ENCODE measurements at regions of chr7 and their contacts with region 1.

Region 1: DNA sequence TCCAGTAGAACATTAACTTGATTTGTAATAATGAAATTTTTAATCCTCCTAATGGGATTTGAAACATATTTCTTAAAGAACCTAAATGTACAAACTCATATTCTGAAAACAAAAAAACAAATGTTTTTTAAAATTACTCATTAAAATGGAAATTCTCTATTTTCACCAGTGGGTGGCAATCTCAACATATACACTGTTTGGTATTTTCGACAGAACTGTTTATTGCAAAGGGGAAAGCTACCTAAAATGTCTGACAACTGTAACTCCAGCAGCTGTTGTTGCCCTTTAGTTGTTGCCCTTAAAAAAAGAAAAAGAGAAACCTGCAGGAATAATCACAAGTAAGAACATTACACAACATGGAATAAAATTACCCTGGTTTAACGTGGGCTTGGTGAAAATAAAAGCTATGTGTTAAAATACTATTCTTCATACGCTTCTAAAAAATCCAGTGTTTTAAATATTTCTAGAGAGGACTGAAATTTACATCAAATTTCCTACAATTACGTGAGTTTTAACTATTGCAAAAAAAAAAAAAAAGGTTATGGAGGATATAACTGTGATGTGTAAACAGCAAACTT is 54.5 kb downstream of the COL1A2 start:
- DNase-seq: peak; percentile 49
- H3K4me3 ChIP-seq: no peak overlapping the region
- H3K27ac ChIP-seq: no peak overlapping the region
- H3K4me1 ChIP-seq: peaks cover 0 to 11% of the 10 kb centered on the region in 2 experiments; a peak in 2 of 4 replicates
- H3K27me3 ChIP-seq: no peaks in the 10 kb centered on the region
- CTCF ChIP-seq: peak; percentile 88
- EP300 ChIP-seq: no peak
- RAD21 ChIP-seq: peak; percentile 97

Region 2: GRCh38 chr7:94295850-94296249 is 153.4 kb before region 1 on chr7:
- CTCF ChIA-PET with region 1: interaction called, 344 read pairs
- POLR2A ChIA-PET with region 1: no interaction called
- DNase-seq: peak; percentile 39
- H3K4me3 ChIP-seq: no peak overlapping the region
- H3K27ac ChIP-seq: peak overlapping the region; percentile 58 to 99; a peak in 3 of 4 replicates
- H3K4me1 ChIP-seq: peaks cover 9 to 47% of the 10 kb centered on the region in 2 experiments
- H3K27me3 ChIP-seq: no peaks in the 10 kb centered on the region
- CTCF ChIP-seq: peak; percentile 90
- EP300 ChIP-seq: no peak; a peak in 1 of 4 replicates
- RAD21 ChIP-seq: peak; percentile 92

Region 3: GRCh38 chr7:94525923-94526322 is 76.7 kb after region 1 on chr7:
- CTCF ChIA-PET with region 1: no interaction called
- POLR2A ChIA-PET with region 1: no interaction called
- DNase-seq: no peak
- H3K4me3 ChIP-seq: no peak overlapping the region
- H3K27ac ChIP-seq: no peak overlapping the region
- H3K4me1 ChIP-seq: no peaks in the 10 kb centered on the region; a peak in 1 of 4 replicates
- H3K27me3 ChIP-seq: no peaks in the 10 kb centered on the region
- CTCF ChIP-seq: no peak
- EP300 ChIP-seq: no peak
- RAD21 ChIP-seq: no peak

Region 4: GRCh38 chr7:94580596-94580995 is 131.4 kb after region 1 on chr7:
- CTCF ChIA-PET with region 1: no interaction called
- POLR2A ChIA-PET with region 1: no interaction called
- DNase-seq: no peak
- H3K4me3 ChIP-seq: no peak overlapping the region
- H3K27ac ChIP-seq: no peak overlapping the region
- H3K4me1 ChIP-seq: no peaks in the 10 kb centered on the region; a peak in 1 of 4 replicates
- H3K27me3 ChIP-seq: no peaks in the 10 kb centered on the region
- CTCF ChIP-seq: no peak
- EP300 ChIP-seq: no peak
- RAD21 ChIP-seq: no peak

Region 5: GRCh38 chr7:94595717-94596116 is 146.5 kb after region 1 on chr7:
- CTCF ChIA-PET with region 1: interaction called, 10 read pairs
- POLR2A ChIA-PET with region 1: no interaction called
- DNase-seq: peak; percentile 25
- H3K4me3 ChIP-seq: no peak overlapping the region
- H3K27ac ChIP-seq: peak overlapping the region; percentile 27 to 71; a peak in 3 of 4 replicates
- H3K4me1 ChIP-seq: peaks cover 11 to 26% of the 10 kb centered on the region in 2 experiments; a peak in 3 of 4 replicates
- H3K27me3 ChIP-seq: no peaks in the 10 kb centered on the region
- CTCF ChIP-seq: no peak
- EP300 ChIP-seq: peak; percentile 40 to 80; a peak in 3 of 4 replicates
- RAD21 ChIP-seq: no peak

Region 6: GRCh38 chr7:94657771-94658693 is 208.8 kb after region 1 on chr7:
- CTCF ChIA-PET with region 1: interaction called, 64 read pairs
- POLR2A ChIA-PET with region 1: interaction called, 5 read pairs
- DNase-seq: peak; percentile 87
- H3K4me3 ChIP-seq: peak overlapping the region in 1 of 2 experiments; percentile 94; a peak in 2 of 4 replicates
- H3K27ac ChIP-seq: peak overlapping the region in 1 of 2 experiments; percentile 12; a peak in 1 of 4 replicates
- H3K4me1 ChIP-seq: peaks cover 10 to 15% of the 10 kb centered on the region in 2 experiments; a peak in 3 of 4 replicates
- H3K27me3 ChIP-seq: no peaks in the 10 kb centered on the region
- CTCF ChIP-seq: no peak
- EP300 ChIP-seq: no peak
- RAD21 ChIP-seq: peak; percentile 10; the same call in 1 of the 2 replicates

Region 7: GRCh38 chr7:95199779-95200558 is 750.7 kb after region 1 on chr7:
- CTCF ChIA-PET with region 1: interaction called, 77 read pairs
- POLR2A ChIA-PET with region 1: no interaction called
- DNase-seq: peak; percentile 69
- H3K4me3 ChIP-seq: no peak overlapping the region; a peak in 1 of 4 replicates
- H3K27ac ChIP-seq: no peak overlapping the region
- H3K4me1 ChIP-seq: peaks cover 0 to 12% of the 10 kb centered on the region in 2 experiments; a peak in 2 of 4 replicates
- H3K27me3 ChIP-seq: peaks cover 7% of the 10 kb centered on the region; the same call in 1 of the 2 replicates
- CTCF ChIP-seq: peak; percentile 82
- EP300 ChIP-seq: no peak
- RAD21 ChIP-seq: peak; percentile 95

Region 8: DNA sequence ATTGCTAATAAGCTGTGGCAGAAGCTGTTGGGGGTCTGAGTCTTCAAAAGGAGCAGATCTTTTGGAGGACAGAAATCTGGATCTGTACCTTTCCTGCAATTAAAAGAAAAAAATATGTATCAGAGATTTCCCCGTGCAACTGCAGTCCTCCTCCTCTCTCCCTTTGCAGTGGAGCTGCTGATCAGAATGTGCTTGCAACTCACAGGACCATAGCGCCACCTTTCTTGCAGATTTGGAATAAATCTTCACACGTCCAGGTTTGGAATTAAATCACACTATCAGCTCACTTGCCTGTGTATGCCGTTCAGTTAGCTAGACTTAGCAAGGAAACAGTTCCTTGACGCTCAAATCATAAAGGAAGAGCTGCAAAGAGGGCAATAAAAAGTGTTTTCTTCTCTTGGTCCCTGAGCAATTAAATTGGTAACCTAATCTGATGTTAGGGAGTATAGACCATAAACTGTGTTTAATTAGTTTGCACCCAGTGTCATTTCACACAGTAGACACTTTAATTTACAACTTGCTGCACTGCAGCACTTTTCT is 797.7 kb after region 1 on chr7:
- CTCF ChIA-PET with region 1: interaction called, 24 read pairs
- POLR2A ChIA-PET with region 1: no interaction called
- DNase-seq: peak; percentile 55
- H3K4me3 ChIP-seq: peak overlapping the region; percentile 21 to 25; a peak in 2 of 4 replicates
- H3K27ac ChIP-seq: no peak overlapping the region
- H3K4me1 ChIP-seq: peaks cover 0 to 4% of the 10 kb centered on the region in 2 experiments; a peak in 2 of 4 replicates
- H3K27me3 ChIP-seq: no peaks in the 10 kb centered on the region
- CTCF ChIP-seq: peak; percentile 84
- EP300 ChIP-seq: no peak
- RAD21 ChIP-seq: peak; percentile 87

Measured in SK-N-SH (cell line).